WTC11 (cell line): ENCODE measurements at regions of chr12 and their contacts with region 1.

Region 1: GRCh38 chr12:57213058-57213715 is 3.4 kb upstream of the NXPH4 start:
- DNase-seq: peak; percentile 87
- ATAC-seq: peak; percentile 14
- H3K4me3 Mint-ChIP-seq: peak overlapping the region; percentile 53
- H3K27ac Mint-ChIP-seq: peak overlapping the region; percentile 79; the same call in 1 of the 2 replicates
- H3K4me1 Mint-ChIP-seq: peaks cover 35% of the 10 kb centered on the region
- H3K27me3 Mint-ChIP-seq: peaks cover 44% of the 10 kb centered on the region
- CTCF ChIP-seq: peak; percentile 87

Region 2: GRCh38 chr12:57046086-57046826 is 166.9 kb before region 1 on chr12:
- CTCF ChIA-PET with region 1: no interaction called
- POLR2A ChIA-PET with region 1: no interaction called
- DNase-seq: no peak
- ATAC-seq: no peak
- H3K4me3 Mint-ChIP-seq: no peak overlapping the region
- H3K27ac Mint-ChIP-seq: no peak overlapping the region
- H3K4me1 Mint-ChIP-seq: no peaks in the 10 kb centered on the region
- H3K27me3 Mint-ChIP-seq: peaks cover 10% of the 10 kb centered on the region; the same call in 1 of the 2 replicates
- CTCF ChIP-seq: no peak

Region 3: DNA sequence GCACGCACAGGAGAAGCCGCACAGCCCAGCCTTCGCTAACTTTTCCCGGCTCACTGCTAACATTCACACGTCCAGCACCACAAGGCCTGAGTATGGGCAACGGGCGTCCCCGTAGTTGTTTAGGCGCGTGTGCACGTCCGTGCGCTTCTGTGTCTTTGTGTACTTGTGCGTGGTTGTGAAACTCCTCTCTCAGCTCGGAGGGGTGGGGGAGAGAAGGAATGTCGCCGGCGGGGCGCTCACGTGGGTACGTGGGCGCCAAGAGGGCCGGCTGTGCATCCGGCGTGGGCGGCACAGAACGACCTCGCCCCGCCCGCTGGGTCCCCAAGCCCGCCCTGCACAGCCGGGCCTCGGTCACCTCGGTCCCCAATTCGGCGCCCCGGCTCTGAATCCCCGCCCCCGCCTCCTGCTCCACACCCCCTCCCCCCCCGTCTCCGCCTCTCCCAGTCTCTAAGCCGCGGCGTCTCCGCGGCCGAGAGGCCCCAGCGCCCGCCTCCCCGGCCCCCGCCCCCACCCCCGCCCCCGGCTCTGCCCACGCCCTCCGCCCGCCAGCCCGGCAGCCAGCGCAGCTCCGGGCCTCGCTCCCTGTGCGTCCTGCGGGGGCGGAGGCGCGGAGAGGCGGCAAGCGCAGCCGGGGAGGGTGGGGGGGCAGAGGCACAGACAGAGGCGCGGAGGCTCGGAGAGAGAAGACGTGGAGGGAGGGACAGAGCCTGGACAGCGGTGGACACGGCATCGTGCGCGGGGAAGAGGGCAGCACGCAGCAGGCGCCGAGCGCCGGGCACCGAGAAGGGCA is 124.5 kb before region 1 on chr12 and contains the start of gene NAB2:
- CTCF ChIA-PET with region 1: interaction called, 12 read pairs
- POLR2A ChIA-PET with region 1: no interaction called
- DNase-seq: peak; percentile 91
- ATAC-seq: peak; percentile 46
- H3K4me3 Mint-ChIP-seq: peak within 1 kb of the TSS; percentile 88
- H3K27ac Mint-ChIP-seq: peak within 1 kb of the TSS; percentile 100
- H3K4me1 Mint-ChIP-seq: peaks cover 40% of the 10 kb centered on the region
- H3K27me3 Mint-ChIP-seq: no peaks in the 10 kb centered on the region; the same call in 1 of the 2 replicates
- CTCF ChIP-seq: no peak
- total RNA-seq, gene NAB2: 16.5 to 20.5 TPM (median 17.2 TPM) in 3 replicates

Region 4: DNA sequence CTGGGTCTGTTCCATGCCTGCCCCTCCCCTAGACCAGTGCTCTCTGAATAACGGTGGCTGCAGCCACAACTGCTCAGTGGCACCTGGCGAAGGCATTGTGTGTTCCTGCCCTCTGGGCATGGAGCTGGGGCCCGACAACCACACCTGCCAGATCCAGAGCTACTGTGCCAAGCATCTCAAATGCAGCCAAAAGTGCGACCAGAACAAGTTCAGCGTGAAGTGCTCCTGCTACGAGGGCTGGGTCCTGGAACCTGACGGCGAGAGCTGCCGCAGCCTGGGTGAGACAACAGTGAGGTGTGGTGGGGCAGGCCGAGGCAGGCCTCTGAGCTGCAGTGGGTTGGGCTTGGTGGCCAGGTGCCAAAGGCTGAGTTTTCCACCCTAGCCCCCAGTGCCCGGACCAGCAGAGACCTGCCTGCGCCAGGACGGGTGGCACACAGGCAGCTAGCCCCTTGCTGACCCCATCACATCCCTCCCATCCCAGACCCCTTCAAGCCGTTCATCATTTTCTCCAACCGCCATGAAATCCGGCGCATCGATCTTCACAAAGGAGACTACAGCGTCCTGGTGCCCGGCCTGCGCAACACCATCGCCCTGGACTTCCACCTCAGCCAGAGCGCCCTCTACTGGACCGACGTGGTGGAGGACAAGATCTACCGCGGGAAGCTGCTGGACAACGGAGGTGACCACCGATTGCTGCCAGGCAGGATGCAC is 37.6 kb before region 1 on chr12:
- CTCF ChIA-PET with region 1: interaction called, 15 read pairs
- POLR2A ChIA-PET with region 1: interaction called, 4 read pairs
- DNase-seq: peak; percentile 95
- ATAC-seq: peak; percentile 80
- H3K4me3 Mint-ChIP-seq: no peak overlapping the region
- H3K27ac Mint-ChIP-seq: peak overlapping the region; percentile 78
- H3K4me1 Mint-ChIP-seq: no peaks in the 10 kb centered on the region
- H3K27me3 Mint-ChIP-seq: no peaks in the 10 kb centered on the region
- CTCF ChIP-seq: peak; percentile 75

Region 5: GRCh38 chr12:57196956-57197355 is 16.2 kb before region 1 on chr12:
- CTCF ChIA-PET with region 1: interaction called, 12 read pairs
- POLR2A ChIA-PET with region 1: no interaction called
- DNase-seq: no peak
- ATAC-seq: no peak
- H3K4me3 Mint-ChIP-seq: no peak overlapping the region
- H3K27ac Mint-ChIP-seq: no peak overlapping the region
- H3K4me1 Mint-ChIP-seq: no peaks in the 10 kb centered on the region
- H3K27me3 Mint-ChIP-seq: no peaks in the 10 kb centered on the region
- CTCF ChIP-seq: no peak

Region 6: DNA sequence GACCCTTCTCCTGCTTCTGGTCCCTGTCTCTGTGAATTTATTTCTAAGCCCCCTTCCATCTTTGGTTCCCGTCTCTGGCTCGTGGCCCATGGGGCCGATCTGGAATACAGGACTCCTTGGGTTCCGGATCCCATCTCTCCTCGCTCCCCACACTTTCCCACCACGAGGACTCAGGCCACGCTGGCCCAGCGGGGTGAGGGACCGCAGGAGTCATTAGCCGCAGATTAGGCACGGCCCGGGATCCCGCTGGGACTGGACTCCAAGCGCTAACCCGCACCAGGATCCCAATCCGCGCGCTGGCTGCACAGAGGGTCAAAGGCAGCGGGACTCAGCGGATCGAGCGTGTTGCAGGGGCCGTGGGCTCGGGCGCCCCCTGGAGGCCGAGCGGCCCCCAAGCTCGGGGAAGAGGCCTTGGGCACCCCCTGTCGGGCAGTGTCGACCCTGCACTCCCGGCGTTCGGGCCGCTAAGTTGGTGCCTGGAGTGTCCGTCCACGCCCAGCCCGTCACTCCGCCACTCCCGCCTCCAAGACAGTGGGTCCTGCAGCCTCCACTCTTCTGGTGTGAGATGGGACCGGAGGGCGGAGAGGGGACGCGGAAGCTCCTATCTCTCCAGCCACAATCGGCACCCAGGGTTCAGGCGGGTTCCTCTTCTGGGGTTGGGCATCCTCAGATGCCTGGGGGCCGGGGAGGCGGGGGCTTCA is 25.8 kb after region 1 on chr12:
- CTCF ChIA-PET with region 1: interaction called, 415 read pairs
- POLR2A ChIA-PET with region 1: interaction called, 18 read pairs
- DNase-seq: peak; percentile 90
- ATAC-seq: peak; percentile 10
- H3K4me3 Mint-ChIP-seq: peak overlapping the region; percentile 84
- H3K27ac Mint-ChIP-seq: no peak overlapping the region; the same call in 1 of the 2 replicates
- H3K4me1 Mint-ChIP-seq: peaks cover 66% of the 10 kb centered on the region
- H3K27me3 Mint-ChIP-seq: peaks cover 89% of the 10 kb centered on the region
- CTCF ChIP-seq: peak; percentile 100

Region 7: GRCh38 chr12:57261428-57261865 is 48.3 kb after region 1 on chr12:
- CTCF ChIA-PET with region 1: interaction called, 17 read pairs
- POLR2A ChIA-PET with region 1: no interaction called
- DNase-seq: no peak
- ATAC-seq: peak; percentile 73
- H3K4me3 Mint-ChIP-seq: no peak overlapping the region
- H3K27ac Mint-ChIP-seq: no peak overlapping the region
- H3K4me1 Mint-ChIP-seq: peaks cover 12% of the 10 kb centered on the region
- H3K27me3 Mint-ChIP-seq: no peaks in the 10 kb centered on the region
- CTCF ChIP-seq: no peak

Region 8: GRCh38 chr12:57462251-57462911 is 249.2 kb after region 1 on chr12:
- CTCF ChIA-PET with region 1: interaction called, 12 read pairs
- POLR2A ChIA-PET with region 1: no interaction called
- DNase-seq: peak; percentile 96
- ATAC-seq: peak; percentile 59
- H3K4me3 Mint-ChIP-seq: peak overlapping the region; percentile 96
- H3K27ac Mint-ChIP-seq: peak overlapping the region; percentile 100
- H3K4me1 Mint-ChIP-seq: peaks cover 25% of the 10 kb centered on the region
- H3K27me3 Mint-ChIP-seq: peaks cover 9% of the 10 kb centered on the region
- CTCF ChIP-seq: peak; percentile 81